ENCODE measurements at regions of chr17 and their contacts with region 1.

Region 1: DNA sequence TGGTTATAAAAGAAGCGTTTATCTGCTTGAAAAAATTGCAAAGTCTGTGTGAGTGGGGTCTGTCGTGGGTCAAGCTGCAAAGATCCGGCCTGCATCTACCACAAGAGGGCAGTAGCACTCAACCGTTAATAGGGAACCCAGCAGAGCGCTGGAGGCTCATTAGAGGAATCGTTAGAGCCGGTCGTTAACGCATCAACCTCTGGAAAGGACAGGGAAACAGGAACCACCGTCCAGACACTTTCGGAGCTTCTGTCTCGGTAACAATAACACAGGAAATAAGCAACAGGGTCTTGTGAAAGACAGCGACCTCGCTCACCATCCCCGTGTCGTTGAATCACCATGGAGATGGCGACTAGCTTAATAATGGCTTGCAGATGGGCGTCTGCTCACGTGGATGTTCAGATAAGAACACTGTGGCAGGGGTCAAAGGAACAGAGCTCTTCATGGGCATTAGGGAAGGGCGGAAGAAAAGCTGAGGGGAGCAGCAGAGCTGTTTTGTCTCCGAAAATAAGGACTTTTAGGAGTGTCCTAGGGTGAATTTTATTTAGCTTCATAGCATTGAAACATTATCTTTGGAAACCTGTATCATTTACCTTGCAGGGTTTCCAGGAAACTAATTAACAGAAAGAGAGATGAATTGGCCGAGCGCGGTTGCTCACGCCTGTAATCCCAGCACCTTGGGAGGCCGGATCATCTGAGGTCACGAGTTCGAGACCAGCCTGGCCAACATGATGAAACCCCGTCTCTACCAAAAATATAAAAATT is 11.9 kb upstream of the NSRP1 start:
- DNase-seq: peak; percentile 63
- H3K4me3 ChIP-seq: peak overlapping the region; percentile 4 to 19
- H3K27ac ChIP-seq: no peak overlapping the region
- H3K4me1 ChIP-seq: no peaks in the 10 kb centered on the region
- H3K27me3 ChIP-seq: no peaks in the 10 kb centered on the region
- CTCF ChIP-seq: peak; percentile 38 to 79 (median 74)
- POLR2A ChIP-seq: no peak

Region 2: GRCh38 chr17:29579866-29580771 is 524.6 kb before region 1 on chr17:
- intact Hi-C with region 1: loop called (anchors 10 kb)
- DNase-seq: peak; percentile 85
- H3K4me3 ChIP-seq: no peak overlapping the region
- H3K27ac ChIP-seq: no peak overlapping the region
- H3K4me1 ChIP-seq: no peaks in the 10 kb centered on the region
- H3K27me3 ChIP-seq: no peaks in the 10 kb centered on the region
- CTCF ChIP-seq: peak; percentile 78 to 97 (median 90)
- POLR2A ChIP-seq: no peak

Measured in prostate gland (tissue), 2 donors.